K562 (cell line): ENCODE measurements at regions of chrX and their contacts with region 1.

Region 1: GRCh38 chrX:44872817-44873414 is at the start of gene KDM6A:
- DNase-seq: peak; percentile 94 to 98 (median 96)
- ATAC-seq: peak; percentile 88
- H3K4me3 ChIP-seq: peak within 1 kb of the TSS; percentile 99
- H3K27ac ChIP-seq: peak within 1 kb of the TSS; percentile 93
- H3K4me1 ChIP-seq: peaks cover 0 to 14% of the 10 kb centered on the region in 2 experiments; a peak in 4 of 5 replicates
- H3K27me3 ChIP-seq: no peaks in the 10 kb centered on the region
- CTCF ChIP-seq: no peak
- EP300 ChIP-seq: no peak
- POLR2A ChIP-seq: 0 out of 2 replicates have a peak, but pooled peaks have one; percentile 50
- RAD21 ChIP-seq: no peak
- polyA plus RNA-seq, gene KDM6A: 8.4 to 8.9 TPM

Region 2: DNA sequence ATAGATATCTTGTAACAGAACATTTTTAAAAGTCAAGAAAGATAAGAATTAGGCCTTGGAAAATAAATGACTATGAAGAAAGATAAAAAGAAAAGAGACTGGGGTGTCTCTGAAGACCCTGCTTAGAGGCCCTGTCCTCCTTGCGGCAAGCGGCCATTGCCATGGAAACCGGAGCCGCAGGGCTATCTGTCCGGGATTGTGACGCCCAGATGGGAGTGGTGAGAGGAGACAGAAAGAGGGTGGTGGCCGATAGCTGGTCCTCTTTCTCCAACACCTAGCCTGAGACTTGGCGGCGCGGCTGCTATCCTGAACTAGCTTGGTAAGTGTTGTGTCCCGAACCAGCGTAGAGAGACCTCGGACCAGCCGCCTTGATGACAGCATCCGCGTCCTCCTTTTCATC is 29.2 kb before region 1 on chrX and contains the start of gene DUSP21:
- CTCF ChIA-PET with region 1: no interaction called
- POLR2A ChIA-PET with region 1: interaction called, 11 read pairs
- in situ Hi-C with region 1: no loop called
- intact Hi-C with region 1: no loop called
- DNase-seq: peak; percentile 66 to 85 (median 74)
- ATAC-seq: peak; percentile 95
- H3K4me3 ChIP-seq: no peak within 1 kb of the TSS
- H3K27ac ChIP-seq: peak within 1 kb of the TSS; percentile 89
- H3K4me1 ChIP-seq: peaks cover 8 to 14% of the 10 kb centered on the region in 2 experiments; a peak in 4 of 5 replicates
- H3K27me3 ChIP-seq: no peaks in the 10 kb centered on the region
- CTCF ChIP-seq: no peak
- EP300 ChIP-seq: no peak
- POLR2A ChIP-seq: no peak
- RAD21 ChIP-seq: no peak
- polyA plus RNA-seq, gene DUSP21: 2.0 to 2.5 TPM

Region 3: GRCh38 chrX:44914532-44915198 is 41.7 kb after region 1 on chrX:
- CTCF ChIA-PET with region 1: no interaction called
- POLR2A ChIA-PET with region 1: interaction called, 3 read pairs
- in situ Hi-C with region 1: no loop called
- intact Hi-C with region 1: loop called (anchors 2 kb)
- DNase-seq: no peak
- ATAC-seq: peak; percentile 42
- H3K4me3 ChIP-seq: no peak overlapping the region
- H3K27ac ChIP-seq: peak overlapping the region; percentile 76
- H3K4me1 ChIP-seq: peaks cover 22 to 23% of the 10 kb centered on the region in 2 experiments; a peak in 4 of 5 replicates
- H3K27me3 ChIP-seq: no peaks in the 10 kb centered on the region
- CTCF ChIP-seq: no peak
- EP300 ChIP-seq: no peak
- POLR2A ChIP-seq: no peak
- RAD21 ChIP-seq: no peak

Region 4: DNA sequence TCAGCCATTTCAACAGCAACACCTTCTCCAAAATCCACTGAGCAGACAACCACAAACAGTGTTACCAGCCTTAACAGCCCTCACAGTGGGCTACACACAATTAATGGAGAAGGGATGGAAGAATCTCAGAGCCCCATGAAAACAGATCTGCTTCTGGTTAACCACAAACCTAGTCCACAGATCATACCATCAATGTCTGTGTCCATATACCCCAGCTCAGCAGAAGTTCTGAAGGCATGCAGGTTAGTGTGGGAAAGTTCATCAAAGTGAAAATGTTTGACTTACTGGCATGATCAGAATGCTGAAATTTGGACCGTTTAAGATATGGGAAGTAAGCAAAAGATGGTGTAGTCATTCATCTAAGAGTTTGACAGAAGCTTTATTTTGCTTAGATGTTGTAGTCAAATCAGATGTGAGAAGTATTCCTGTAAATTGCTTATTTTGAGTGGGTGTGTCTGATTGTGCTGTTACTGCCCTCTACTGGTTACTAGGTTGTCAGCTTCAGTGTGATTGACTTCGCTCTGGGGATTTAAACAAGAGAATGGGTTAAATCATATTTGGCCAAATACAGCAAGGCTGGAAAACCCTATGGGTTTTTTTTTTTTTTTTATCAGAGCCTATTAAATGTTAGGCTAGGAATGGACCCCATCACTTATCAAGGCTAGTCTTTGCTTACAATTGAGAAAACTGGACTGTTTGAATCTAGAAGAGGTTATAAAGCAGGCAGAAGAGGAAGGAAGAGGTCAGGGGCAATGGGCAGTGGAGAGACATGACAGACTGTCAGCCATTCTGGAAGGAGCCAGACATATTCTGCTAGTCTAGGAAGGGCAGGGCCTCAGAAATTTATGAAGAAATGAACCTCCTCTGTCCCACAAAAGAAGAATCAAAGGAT is 197.4 kb after region 1 on chrX:
- CTCF ChIA-PET with region 1: no interaction called
- POLR2A ChIA-PET with region 1: interaction called, 3 read pairs
- in situ Hi-C with region 1: no loop called
- intact Hi-C with region 1: loop called (anchors 5 kb)
- DNase-seq: peak; percentile 10 to 58 (median 14)
- ATAC-seq: peak; percentile 83
- H3K4me3 ChIP-seq: no peak overlapping the region
- H3K27ac ChIP-seq: no peak overlapping the region
- H3K4me1 ChIP-seq: no peaks in the 10 kb centered on the region
- H3K27me3 ChIP-seq: no peaks in the 10 kb centered on the region
- CTCF ChIP-seq: peak; percentile 39 to 67 (median 57)
- EP300 ChIP-seq: no peak
- POLR2A ChIP-seq: no peak
- RAD21 ChIP-seq: peak; percentile 55 to 62

Region 5: GRCh38 chrX:45731448-45731847 is 858.5 kb after region 1 on chrX:
- CTCF ChIA-PET with region 1: no interaction called
- POLR2A ChIA-PET with region 1: no interaction called
- in situ Hi-C with region 1: no loop called
- intact Hi-C with region 1: no loop called
- DNase-seq: no peak
- ATAC-seq: no peak
- H3K4me3 ChIP-seq: no peak overlapping the region
- H3K27ac ChIP-seq: no peak overlapping the region
- H3K4me1 ChIP-seq: no peaks in the 10 kb centered on the region
- H3K27me3 ChIP-seq: no peaks in the 10 kb centered on the region; a peak in 1 of 5 replicates
- CTCF ChIP-seq: no peak
- EP300 ChIP-seq: no peak
- POLR2A ChIP-seq: no peak
- RAD21 ChIP-seq: no peak